PC-9 (cell line): ENCODE measurements at regions of chr2 and their contacts with region 1.

Region 1: GRCh38 chr2:138536302-138536701 is 34.7 kb downstream of the SPOPL start:
- DNase-seq: no peak
- H3K4me3 ChIP-seq: no peak overlapping the region
- H3K27ac ChIP-seq: no peak overlapping the region
- H3K4me1 ChIP-seq: no peaks in the 10 kb centered on the region
- H3K27me3 ChIP-seq: no peaks in the 10 kb centered on the region
- CTCF ChIP-seq: no peak

Region 2: GRCh38 chr2:138607746-138608145 is 71.4 kb after region 1 on chr2:
- CTCF ChIA-PET with region 1: no interaction called
- POLR2A ChIA-PET with region 1: no interaction called
- intact Hi-C with region 1: loop called (anchors 2 kb)
- DNase-seq: no peak
- H3K4me3 ChIP-seq: no peak overlapping the region
- H3K27ac ChIP-seq: no peak overlapping the region
- H3K4me1 ChIP-seq: no peaks in the 10 kb centered on the region
- H3K27me3 ChIP-seq: no peaks in the 10 kb centered on the region
- CTCF ChIP-seq: no peak